ENCODE measurements at regions of chr10 and their contacts with region 1.

Region 1: GRCh38 chr10:78972947-78973900 is 95.5 kb upstream of the ZMIZ1 start:
- DNase-seq: peak; percentile 93 to 98
- ATAC-seq: peak; percentile 65 to 71
- H3K4me3 ChIP-seq: peak overlapping the region; percentile 47
- H3K27ac ChIP-seq: peak overlapping the region; percentile 96
- H3K4me1 ChIP-seq: peaks cover 50% of the 10 kb centered on the region
- CTCF ChIP-seq: no peak
- EP300 ChIP-seq: peak; percentile 25 to 54; a peak in 2 of 5 replicates
- POLR2A ChIP-seq: no peak; the same call in 1 of the 2 replicates
- RAD21 ChIP-seq: peak in 1 of 2 experiments; percentile 26; a peak in 3 of 5 replicates

Region 2: GRCh38 chr10:78899996-78900714 is 73.1 kb before region 1 on chr10:
- CTCF ChIA-PET with region 1: no interaction called
- POLR2A ChIA-PET with region 1: no interaction called
- DNase-seq: no peak
- ATAC-seq: peak; percentile 42 to 50; a peak in 4 of 6 replicates
- H3K4me3 ChIP-seq: no peak overlapping the region
- H3K27ac ChIP-seq: no peak overlapping the region
- H3K4me1 ChIP-seq: no peaks in the 10 kb centered on the region
- CTCF ChIP-seq: no peak
- EP300 ChIP-seq: no peak
- POLR2A ChIP-seq: no peak
- RAD21 ChIP-seq: no peak

Region 3: GRCh38 chr10:78960316-78960800 is 12.9 kb before region 1 on chr10:
- CTCF ChIA-PET with region 1: interaction called, 16 read pairs
- POLR2A ChIA-PET with region 1: interaction called, 34 read pairs
- DNase-seq: no peak
- ATAC-seq: no peak
- H3K4me3 ChIP-seq: no peak overlapping the region
- H3K27ac ChIP-seq: peak overlapping the region in 1 of 2 experiments; percentile 35; a peak in 2 of 6 replicates
- H3K4me1 ChIP-seq: peaks cover 26% of the 10 kb centered on the region
- CTCF ChIP-seq: no peak
- EP300 ChIP-seq: no peak
- POLR2A ChIP-seq: no peak
- RAD21 ChIP-seq: no peak

Region 4: DNA sequence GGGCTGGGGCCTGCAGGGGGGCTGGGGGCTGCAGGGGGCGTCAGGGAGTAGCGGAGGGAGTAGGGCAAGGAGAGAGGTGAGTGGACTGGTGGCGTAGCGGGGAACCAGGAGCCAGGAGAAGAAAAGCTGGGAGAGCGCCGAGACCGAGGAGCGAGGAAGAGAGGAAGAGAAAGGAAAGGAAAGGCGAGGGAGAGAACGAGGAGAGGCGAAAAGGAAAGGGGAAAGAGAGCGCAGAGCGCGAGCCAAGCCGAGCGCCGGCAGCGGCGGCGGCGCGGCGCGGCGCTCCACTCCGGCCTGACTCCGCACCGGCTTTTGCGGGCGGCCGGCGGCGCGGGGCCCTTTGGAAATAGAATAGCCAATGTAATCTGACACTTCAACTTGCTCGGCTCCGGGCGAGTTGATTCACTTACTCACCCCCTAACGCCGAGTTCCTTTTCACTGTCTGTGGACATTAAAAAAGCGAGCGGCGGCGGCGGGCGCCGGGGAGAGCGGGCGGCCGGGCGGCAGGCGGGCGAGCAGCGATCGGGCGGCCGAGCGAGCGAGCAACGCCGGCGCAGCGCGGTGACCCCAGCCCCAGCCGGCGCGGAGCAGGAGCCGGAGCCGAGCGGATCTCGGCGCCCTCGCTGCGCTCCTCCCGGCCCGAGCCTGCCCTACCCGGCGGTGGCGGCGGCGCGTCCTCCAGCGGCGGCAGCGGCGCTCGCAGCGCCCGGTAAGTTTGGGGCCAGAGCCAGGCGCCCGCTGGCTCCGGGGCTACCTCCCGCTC is 95.5 kb after region 1 on chr10 and contains the start of gene ZMIZ1:
- CTCF ChIA-PET with region 1: interaction called, 6 read pairs
- POLR2A ChIA-PET with region 1: interaction called, 42 read pairs
- DNase-seq: peak; percentile 92 to 93
- ATAC-seq: peak; percentile 46 to 52
- H3K4me3 ChIP-seq: peak within 1 kb of the TSS; percentile 96
- H3K27ac ChIP-seq: peak within 1 kb of the TSS; percentile 91 to 98
- H3K4me1 ChIP-seq: peaks cover 36% of the 10 kb centered on the region
- CTCF ChIP-seq: no peak; the same call in 1 of the 3 replicates
- EP300 ChIP-seq: no peak
- POLR2A ChIP-seq: peak; percentile 62
- RAD21 ChIP-seq: peak in 1 of 2 experiments; percentile 38; a peak in 3 of 5 replicates
- polyA plus RNA-seq, gene ZMIZ1: 8.1 and 14.7 TPM in 2 replicates

Measured in A549 (cell line).